ENCODE measurements at regions of chr4 and their contacts with region 1.

Region 1: GRCh38 chr4:4386736-4387392 is at the start of gene NSG1:
- DNase-seq: peak in 11 of 14 experiments; percentile 12 to 72 (median 44)
- ATAC-seq: peak; percentile 70
- H3K4me3 ChIP-seq: peak within 1 kb of the TSS; percentile 63
- H3K4me3 Mint-ChIP-seq: peak within 1 kb of the TSS; percentile 96
- H3K27ac ChIP-seq: no peak within 1 kb of the TSS
- H3K27ac Mint-ChIP-seq: peak within 1 kb of the TSS; percentile 63
- H3K4me1 ChIP-seq: peaks cover 25% of the 10 kb centered on the region
- H3K4me1 Mint-ChIP-seq: peaks cover 17% of the 10 kb centered on the region
- H3K27me3 ChIP-seq: peaks cover 3 to 15% of the 10 kb centered on the region in 2 experiments
- H3K27me3 Mint-ChIP-seq: peaks cover 19% of the 10 kb centered on the region
- CTCF ChIP-seq: no peak
- total RNA-seq, gene NSG1: 10.3 to 10.4 TPM

Region 2: GRCh38 chr4:3724319-3725231 is 662.3 kb before region 1 on chr4:
- CTCF ChIA-PET with region 1: no interaction called
- POLR2A ChIA-PET with region 1: no interaction called
- intact Hi-C with region 1: no loop called
- DNase-seq: no peak
- ATAC-seq: no peak
- H3K4me3 ChIP-seq: no peak overlapping the region
- H3K4me3 Mint-ChIP-seq: no peak overlapping the region
- H3K27ac ChIP-seq: no peak overlapping the region
- H3K27ac Mint-ChIP-seq: no peak overlapping the region
- H3K4me1 ChIP-seq: no peaks in the 10 kb centered on the region
- H3K4me1 Mint-ChIP-seq: peaks cover 5% of the 10 kb centered on the region
- H3K27me3 ChIP-seq: peaks cover 46 to 48% of the 10 kb centered on the region in 2 experiments
- H3K27me3 Mint-ChIP-seq: peaks cover 35% of the 10 kb centered on the region
- CTCF ChIP-seq: no peak

Region 3: DNA sequence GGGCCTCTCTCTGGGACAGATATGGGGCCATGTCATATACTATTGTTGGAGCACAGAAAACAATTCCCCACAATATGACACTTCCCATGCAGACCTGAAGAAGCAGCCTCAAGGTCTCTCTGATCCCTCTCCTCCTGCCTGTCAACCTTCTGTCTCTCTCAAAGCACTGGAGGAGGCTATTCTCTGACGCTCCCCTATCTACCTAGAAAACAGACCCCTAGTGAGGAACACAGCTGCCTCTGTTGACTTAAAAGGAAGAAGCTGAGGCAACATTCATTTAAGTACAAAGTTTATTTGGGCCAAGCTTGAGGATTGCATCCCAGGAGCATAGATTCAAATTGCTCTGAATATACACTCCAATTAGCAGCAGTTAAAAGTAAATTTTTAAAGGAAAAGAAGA is 39.3 kb before region 1 on chr4:
- CTCF ChIA-PET with region 1: no interaction called
- POLR2A ChIA-PET with region 1: interaction called, 12 read pairs
- intact Hi-C with region 1: no loop called
- DNase-seq: no peak
- ATAC-seq: no peak
- H3K4me3 ChIP-seq: no peak overlapping the region
- H3K4me3 Mint-ChIP-seq: peak overlapping the region; percentile 8
- H3K27ac ChIP-seq: no peak overlapping the region
- H3K27ac Mint-ChIP-seq: peak overlapping the region; percentile 82
- H3K4me1 ChIP-seq: peaks cover 16% of the 10 kb centered on the region
- H3K4me1 Mint-ChIP-seq: peaks cover 42% of the 10 kb centered on the region
- H3K27me3 ChIP-seq: no peaks in the 10 kb centered on the region
- H3K27me3 Mint-ChIP-seq: no peaks in the 10 kb centered on the region
- CTCF ChIP-seq: no peak

Region 4: DNA sequence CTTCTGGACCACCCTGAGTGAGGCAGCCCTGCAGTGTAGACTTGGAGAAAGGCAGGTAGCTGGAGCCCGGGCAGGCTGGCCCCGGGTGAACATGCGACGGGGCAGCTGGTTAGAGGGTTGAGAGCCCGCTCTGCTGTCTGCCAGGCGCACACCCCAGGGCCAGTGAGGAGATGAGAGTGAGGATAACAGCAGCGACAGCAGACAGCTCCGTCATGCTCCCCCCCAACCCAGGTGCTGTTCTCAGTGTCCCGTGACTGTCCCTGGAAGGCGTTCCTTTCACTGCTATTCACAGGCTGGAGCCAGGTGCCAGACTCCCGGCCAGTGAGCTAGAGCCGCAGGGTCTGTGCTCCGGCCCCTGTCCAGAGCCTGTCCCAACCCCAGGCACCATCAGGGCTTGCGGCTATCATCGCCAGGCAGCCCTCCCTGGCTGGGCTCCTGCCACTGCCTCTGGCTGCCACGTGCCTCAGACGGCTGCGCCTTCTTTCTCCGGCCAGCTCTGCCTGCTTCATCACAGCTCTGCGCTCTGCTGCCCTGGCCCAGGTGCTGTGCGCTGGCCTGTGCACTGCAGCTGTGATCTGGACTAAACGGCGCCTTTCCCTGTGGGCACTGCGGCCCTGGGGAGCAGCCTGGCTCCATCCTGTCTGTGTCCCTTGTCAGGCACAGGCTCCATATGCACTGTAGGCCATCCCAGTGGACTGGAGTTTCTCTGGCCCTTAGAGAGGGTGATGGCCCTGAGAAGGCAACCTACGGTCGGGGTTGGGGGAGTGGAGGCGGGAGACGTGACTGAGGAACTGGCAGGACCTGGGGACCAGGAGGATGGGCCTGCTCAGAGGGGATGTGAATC is 19.8 kb after region 1 on chr4:
- CTCF ChIA-PET with region 1: no interaction called
- POLR2A ChIA-PET with region 1: no interaction called
- intact Hi-C with region 1: no loop called
- DNase-seq: no peak
- ATAC-seq: no peak
- H3K4me3 ChIP-seq: no peak overlapping the region
- H3K4me3 Mint-ChIP-seq: no peak overlapping the region
- H3K27ac ChIP-seq: no peak overlapping the region
- H3K27ac Mint-ChIP-seq: no peak overlapping the region
- H3K4me1 ChIP-seq: no peaks in the 10 kb centered on the region
- H3K4me1 Mint-ChIP-seq: no peaks in the 10 kb centered on the region
- H3K27me3 ChIP-seq: no peaks in the 10 kb centered on the region
- H3K27me3 Mint-ChIP-seq: no peaks in the 10 kb centered on the region
- CTCF ChIP-seq: no peak

Region 5: GRCh38 chr4:4880492-4880891 is 493.6 kb after region 1 on chr4:
- CTCF ChIA-PET with region 1: no interaction called
- POLR2A ChIA-PET with region 1: no interaction called
- intact Hi-C with region 1: no loop called
- DNase-seq: no peak
- ATAC-seq: no peak
- H3K4me3 ChIP-seq: no peak overlapping the region
- H3K4me3 Mint-ChIP-seq: no peak overlapping the region
- H3K27ac ChIP-seq: no peak overlapping the region
- H3K27ac Mint-ChIP-seq: no peak overlapping the region
- H3K4me1 ChIP-seq: no peaks in the 10 kb centered on the region
- H3K4me1 Mint-ChIP-seq: no peaks in the 10 kb centered on the region
- H3K27me3 ChIP-seq: peaks cover 8 to 22% of the 10 kb centered on the region in 2 experiments
- H3K27me3 Mint-ChIP-seq: peaks cover 52% of the 10 kb centered on the region
- CTCF ChIP-seq: peak; percentile 20

Measured in CD4-positive, alpha-beta T cell (primary cell).